T-cell (primary cell): ENCODE measurements at regions of chr4 and their contacts with region 1.

Region 1: DNA sequence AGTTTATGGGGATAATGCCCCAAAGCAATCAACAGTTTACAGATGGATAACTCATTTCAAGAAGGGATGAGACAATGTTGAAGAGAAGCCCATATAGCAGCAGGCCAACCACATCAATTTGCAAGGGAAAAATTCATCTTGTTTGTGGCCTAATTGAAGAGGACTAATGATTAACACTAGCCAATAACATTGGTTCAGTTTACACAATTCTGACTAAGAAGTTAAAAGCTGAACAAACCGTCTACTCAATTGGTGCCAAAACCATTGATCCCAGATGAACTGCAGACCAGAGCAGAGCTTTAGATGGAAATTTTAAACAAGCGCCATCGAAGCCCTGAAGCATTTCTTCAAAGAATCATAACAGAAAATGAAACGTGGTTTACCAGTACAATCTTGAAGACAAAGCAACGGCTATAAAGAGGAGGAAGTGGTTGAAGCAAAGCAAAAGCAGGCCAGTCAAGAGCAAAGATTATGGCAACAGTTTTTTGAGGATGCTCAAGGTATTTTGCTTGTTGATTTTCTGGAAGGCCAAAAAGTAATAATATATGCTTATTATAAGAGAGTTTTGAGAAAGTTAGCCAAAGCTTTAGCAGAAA is 20.5 kb upstream of the BLTP1 start:
- DNase-seq: peak in 1 of 35 experiments; percentile 49
- ATAC-seq: peak; percentile 83 to 95 (median 94)
- H3K4me3 ChIP-seq: no peak overlapping the region
- H3K4me3 Mint-ChIP-seq: peak overlapping the region in 2 of 3 donors; percentile 1
- H3K27ac ChIP-seq: peak overlapping the region; percentile 68
- H3K27ac Mint-ChIP-seq: peak overlapping the region; percentile 84 to 96
- H3K4me1 ChIP-seq: peaks cover 3 to 5% of the 10 kb centered on the region in 2 experiments
- H3K4me1 Mint-ChIP-seq: peaks cover 21 to 35% (median 21%) of the 10 kb centered on the region in 3 donors
- H3K27me3 ChIP-seq: no peaks in the 10 kb centered on the region
- H3K27me3 Mint-ChIP-seq: no peaks in the 10 kb centered on the region

Region 2: GRCh38 chr4:122052677-122053076 is 79.0 kb before region 1 on chr4:
- CTCF ChIA-PET with region 1: no interaction called
- POLR2A ChIA-PET with region 1: no interaction called
- DNase-seq: no peak
- ATAC-seq: no peak
- H3K4me3 ChIP-seq: no peak overlapping the region
- H3K4me3 Mint-ChIP-seq: no peak overlapping the region
- H3K27ac ChIP-seq: no peak overlapping the region
- H3K27ac Mint-ChIP-seq: no peak overlapping the region
- H3K4me1 ChIP-seq: no peaks in the 10 kb centered on the region
- H3K4me1 Mint-ChIP-seq: peaks cover 0 to 3% (median 2%) of the 10 kb centered on the region in 3 donors
- H3K27me3 ChIP-seq: no peaks in the 10 kb centered on the region
- H3K27me3 Mint-ChIP-seq: no peaks in the 10 kb centered on the region

Region 3: GRCh38 chr4:122156819-122157218 is 25.2 kb after region 1 on chr4:
- CTCF ChIA-PET with region 1: no interaction called
- POLR2A ChIA-PET with region 1: no interaction called
- DNase-seq: peak in 1 of 35 experiments; percentile 43
- ATAC-seq: peak in 1 of 4 experiments; percentile 25
- H3K4me3 ChIP-seq: no peak overlapping the region
- H3K4me3 Mint-ChIP-seq: no peak overlapping the region
- H3K27ac ChIP-seq: no peak overlapping the region
- H3K27ac Mint-ChIP-seq: peak overlapping the region; percentile 20 to 46
- H3K4me1 ChIP-seq: peaks cover 5 to 12% of the 10 kb centered on the region in 2 experiments
- H3K4me1 Mint-ChIP-seq: peaks cover 64 to 68% (median 68%) of the 10 kb centered on the region in 3 donors
- H3K27me3 ChIP-seq: no peaks in the 10 kb centered on the region
- H3K27me3 Mint-ChIP-seq: no peaks in the 10 kb centered on the region

Region 4: GRCh38 chr4:122212880-122213279 is 81.2 kb after region 1 on chr4:
- CTCF ChIA-PET with region 1: no interaction called
- POLR2A ChIA-PET with region 1: interaction called in 1 of 2 experiments, 10 read pairs
- DNase-seq: no peak
- ATAC-seq: no peak
- H3K4me3 ChIP-seq: no peak overlapping the region
- H3K4me3 Mint-ChIP-seq: no peak overlapping the region
- H3K27ac ChIP-seq: no peak overlapping the region
- H3K27ac Mint-ChIP-seq: peak overlapping the region in 1 of 2 donors; percentile 34
- H3K4me1 ChIP-seq: peaks cover 0 to 2% of the 10 kb centered on the region in 2 experiments
- H3K4me1 Mint-ChIP-seq: peaks cover 20 to 28% (median 24%) of the 10 kb centered on the region in 3 donors
- H3K27me3 ChIP-seq: no peaks in the 10 kb centered on the region
- H3K27me3 Mint-ChIP-seq: no peaks in the 10 kb centered on the region